Activated CD4-positive, alpha-beta memory T cell treated with anti-CD3 and anti-CD28 coated beads, Interleukin-2, amount 10 ng/mL, durations not matched to agents 7 days and 5 days (primary cell): ENCODE measurements at regions of chr1 and their contacts with region 1.

Region 1: GRCh38 chr1:26787706-26788514 is at the start of gene PIGV:
- DNase-seq: peak; percentile 90
- H3K4me3 Mint-ChIP-seq: peak within 1 kb of the TSS; percentile 79
- H3K27ac Mint-ChIP-seq: peak within 1 kb of the TSS; percentile 100
- H3K4me1 Mint-ChIP-seq: peaks cover 65% of the 10 kb centered on the region
- H3K27me3 Mint-ChIP-seq: no peaks in the 10 kb centered on the region
- total RNA-seq, gene PIGV: 16.6 to 16.9 TPM

Region 2: DNA sequence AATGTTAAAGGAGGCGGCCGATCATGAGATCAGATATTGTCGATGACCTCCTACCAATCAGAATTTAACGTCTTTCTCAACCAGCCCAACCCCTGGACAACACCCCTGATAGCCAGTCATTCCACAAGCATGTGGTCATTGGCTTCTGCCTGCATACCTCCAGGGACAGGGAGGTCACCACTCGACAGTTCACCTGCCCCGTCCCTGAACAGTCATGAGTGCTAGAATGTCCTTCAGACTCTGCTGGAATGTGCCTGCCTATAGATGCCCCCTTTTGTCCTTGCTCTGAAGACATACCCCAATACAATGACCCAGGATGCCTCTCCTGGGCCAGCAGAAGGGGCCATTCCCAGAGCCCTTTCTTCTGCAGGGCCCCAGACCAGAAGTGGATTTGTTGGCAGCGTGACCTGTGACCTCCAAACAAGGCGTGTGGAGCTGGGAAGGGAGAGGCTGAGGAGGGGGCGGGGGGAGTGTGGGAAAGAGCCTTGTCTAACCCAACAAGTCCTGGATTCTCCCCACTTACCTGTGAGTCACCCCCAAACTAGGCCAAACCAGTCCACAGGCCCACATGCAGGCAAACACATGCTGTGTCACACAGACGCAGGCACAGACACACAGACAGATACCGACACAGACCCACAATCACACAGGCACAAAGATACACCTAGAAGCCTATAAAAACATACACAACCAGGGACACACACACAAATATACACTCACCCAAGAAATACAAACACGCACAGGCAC is 436.1 kb before region 1 on chr1:
- CTCF ChIA-PET with region 1: no interaction called
- POLR2A ChIA-PET with region 1: no interaction called
- DNase-seq: no peak
- H3K4me3 Mint-ChIP-seq: no peak overlapping the region
- H3K27ac Mint-ChIP-seq: no peak overlapping the region
- H3K4me1 Mint-ChIP-seq: peaks cover 7% of the 10 kb centered on the region
- H3K27me3 Mint-ChIP-seq: peaks cover 4% of the 10 kb centered on the region

Region 3: GRCh38 chr1:26541816-26542711 is 245.8 kb before region 1 on chr1:
- CTCF ChIA-PET with region 1: interaction called, 8 read pairs
- POLR2A ChIA-PET with region 1: interaction called, 15 read pairs
- DNase-seq: peak; percentile 89
- H3K4me3 Mint-ChIP-seq: peak overlapping the region; percentile 74
- H3K27ac Mint-ChIP-seq: peak overlapping the region; percentile 96
- H3K4me1 Mint-ChIP-seq: peaks cover 93% of the 10 kb centered on the region
- H3K27me3 Mint-ChIP-seq: no peaks in the 10 kb centered on the region

Region 4: GRCh38 chr1:26677306-26678115 is 110.4 kb before region 1 on chr1:
- CTCF ChIA-PET with region 1: interaction called, 23 read pairs
- POLR2A ChIA-PET with region 1: interaction called, 14 read pairs
- DNase-seq: peak; percentile 56
- H3K4me3 Mint-ChIP-seq: no peak overlapping the region
- H3K27ac Mint-ChIP-seq: no peak overlapping the region
- H3K4me1 Mint-ChIP-seq: peaks cover 21% of the 10 kb centered on the region
- H3K27me3 Mint-ChIP-seq: peaks cover 2% of the 10 kb centered on the region

Region 5: GRCh38 chr1:26723013-26723991 is 64.6 kb before region 1 on chr1:
- CTCF ChIA-PET with region 1: interaction called, 10 read pairs
- POLR2A ChIA-PET with region 1: interaction called, 12 read pairs
- DNase-seq: peak; percentile 38
- H3K4me3 Mint-ChIP-seq: no peak overlapping the region
- H3K27ac Mint-ChIP-seq: peak overlapping the region; percentile 12
- H3K4me1 Mint-ChIP-seq: peaks cover 78% of the 10 kb centered on the region
- H3K27me3 Mint-ChIP-seq: no peaks in the 10 kb centered on the region

Region 6: GRCh38 chr1:26771643-26772321 is 16.1 kb before region 1 on chr1:
- CTCF ChIA-PET with region 1: interaction called, 4 read pairs
- POLR2A ChIA-PET with region 1: interaction called, 10 read pairs
- DNase-seq: no peak
- H3K4me3 Mint-ChIP-seq: no peak overlapping the region
- H3K27ac Mint-ChIP-seq: peak overlapping the region; percentile 61
- H3K4me1 Mint-ChIP-seq: peaks cover 16% of the 10 kb centered on the region
- H3K27me3 Mint-ChIP-seq: no peaks in the 10 kb centered on the region

Region 7: DNA sequence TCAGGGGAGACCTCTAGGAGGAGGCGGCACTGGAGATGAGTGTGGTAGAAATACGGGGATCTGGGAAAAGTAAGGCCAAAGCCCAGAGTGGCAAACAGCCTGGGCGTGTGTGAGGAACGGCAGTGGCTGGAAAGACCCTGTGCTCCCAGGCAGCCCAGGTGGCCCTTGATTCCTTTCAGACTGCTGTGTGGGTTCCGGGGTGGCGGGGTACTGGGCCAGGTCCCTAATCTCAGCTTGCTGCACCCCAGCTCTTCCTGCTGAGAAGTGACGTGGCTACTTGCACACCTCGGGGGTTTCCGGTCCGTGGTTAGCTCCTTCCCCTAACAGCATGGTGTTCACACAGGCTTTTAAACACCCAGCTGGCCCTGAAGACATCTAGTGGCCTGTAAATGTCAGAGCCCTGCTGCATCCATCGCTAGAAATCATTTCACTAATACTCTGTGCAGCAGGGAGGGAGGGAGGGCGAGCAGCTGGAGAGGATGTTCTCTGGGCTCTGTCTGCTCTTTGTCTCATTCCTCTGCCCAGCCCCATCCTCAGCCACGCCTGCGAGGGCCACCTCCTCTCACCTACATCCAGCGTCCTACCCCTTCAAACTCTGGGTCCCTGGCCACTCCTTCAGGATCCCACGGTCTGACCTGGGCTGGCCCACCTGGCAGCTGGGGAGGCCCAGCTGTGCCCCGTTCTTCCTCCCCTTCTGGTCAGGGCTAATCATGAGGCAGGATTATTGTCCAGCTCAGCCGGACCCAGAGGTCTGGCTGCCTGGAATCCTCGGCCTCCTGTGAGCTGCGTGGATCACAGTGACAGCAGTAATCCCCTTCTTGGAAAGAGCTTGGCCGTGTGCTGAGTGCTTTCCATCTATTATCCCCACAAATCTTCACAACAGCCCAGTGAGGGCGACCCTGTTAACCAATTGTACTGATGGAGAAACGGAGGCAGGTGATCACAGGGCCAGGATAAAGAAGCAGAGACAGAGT is 45.8 kb after region 1 on chr1:
- CTCF ChIA-PET with region 1: interaction called, 67 read pairs
- POLR2A ChIA-PET with region 1: interaction called, 72 read pairs
- DNase-seq: peak; percentile 94
- H3K4me3 Mint-ChIP-seq: peak overlapping the region; percentile 66
- H3K27ac Mint-ChIP-seq: peak overlapping the region; percentile 99
- H3K4me1 Mint-ChIP-seq: peaks cover 80% of the 10 kb centered on the region
- H3K27me3 Mint-ChIP-seq: no peaks in the 10 kb centered on the region